ENCODE measurements at regions of chr21 and their contacts with region 1.

Region 1: GRCh38 chr21:36141513-36141925 is 6.6 kb downstream of the CBR3 start:
- DNase-seq: peak; percentile 91 to 94 (median 93)
- H3K4me3 ChIP-seq: no peak overlapping the region
- H3K27ac ChIP-seq: no peak overlapping the region
- H3K4me1 ChIP-seq: peaks cover 0 to 2% (median 1%) of the 10 kb centered on the region in 4 experiments
- H3K27me3 ChIP-seq: no peaks in the 10 kb centered on the region

Region 2: GRCh38 chr21:36156339-36156814 is 14.9 kb after region 1 on chr21:
- CTCF ChIA-PET with region 1: interaction called, 25 read pairs
- POLR2A ChIA-PET with region 1: no interaction called
- DNase-seq: peak; percentile 96 to 98 (median 98)
- H3K4me3 ChIP-seq: peak overlapping the region; percentile 74 to 99 (median 86)
- H3K27ac ChIP-seq: peak overlapping the region in 1 of 2 experiments; percentile 61
- H3K4me1 ChIP-seq: peaks cover 3 to 20% (median 11%) of the 10 kb centered on the region in 4 experiments
- H3K27me3 ChIP-seq: peaks cover 0 to 4% (median 0%) of the 10 kb centered on the region in 5 experiments

Region 3: DNA sequence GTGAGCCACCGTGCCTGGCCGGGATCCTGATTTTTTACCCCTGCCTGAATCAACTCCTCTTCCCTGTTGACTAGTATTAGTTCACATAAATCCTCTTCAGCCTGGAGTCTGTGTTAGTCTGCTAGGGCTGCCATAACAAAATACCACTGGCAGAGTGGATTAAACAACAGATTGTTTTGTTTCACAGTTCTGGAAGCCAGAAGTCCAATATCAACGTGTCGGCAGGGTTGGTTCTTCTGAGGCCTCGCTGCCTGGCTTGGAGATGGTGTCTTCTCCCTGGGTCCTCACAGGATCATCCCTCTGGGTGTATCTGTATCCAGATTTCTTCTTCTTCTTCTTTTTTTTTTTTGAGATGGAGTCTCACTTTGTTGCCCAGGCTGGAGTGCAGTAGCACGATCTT is 33.3 kb after region 1 on chr21:
- CTCF ChIA-PET with region 1: interaction called, 11 read pairs
- POLR2A ChIA-PET with region 1: no interaction called
- DNase-seq: no peak
- H3K4me3 ChIP-seq: no peak overlapping the region
- H3K27ac ChIP-seq: no peak overlapping the region
- H3K4me1 ChIP-seq: peaks cover 0 to 19% (median 7%) of the 10 kb centered on the region in 4 experiments
- H3K27me3 ChIP-seq: no peaks in the 10 kb centered on the region

Region 4: DNA sequence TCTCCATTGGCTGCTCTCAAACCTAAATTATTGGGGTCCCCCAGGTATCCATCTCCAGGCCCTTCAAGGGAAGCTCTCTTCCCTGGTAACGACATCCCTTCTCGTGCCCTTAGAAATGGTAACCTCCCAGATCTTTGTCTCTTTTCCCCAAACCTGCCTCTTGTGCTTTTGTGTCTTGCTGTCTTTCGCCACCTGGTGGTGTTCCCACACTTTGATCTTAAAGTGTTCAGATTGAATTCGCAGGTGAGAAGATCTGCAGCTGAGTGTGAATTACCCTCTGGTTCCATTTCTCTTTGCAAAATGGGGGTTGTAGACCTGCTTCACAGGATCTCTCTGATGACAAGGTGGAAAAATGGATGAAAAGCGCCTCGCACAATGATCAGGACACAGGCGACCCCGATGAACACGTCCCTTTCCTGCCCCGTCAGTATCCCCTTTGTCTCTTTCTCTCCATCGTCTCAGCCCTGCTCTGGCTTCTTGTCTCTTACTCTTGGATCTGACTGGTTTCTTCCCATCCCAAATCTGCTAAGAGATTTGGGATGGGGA is 68.2 kb after region 1 on chr21:
- CTCF ChIA-PET with region 1: interaction called, 104 read pairs
- POLR2A ChIA-PET with region 1: no interaction called
- DNase-seq: peak; percentile 71 to 81 (median 79)
- H3K4me3 ChIP-seq: no peak overlapping the region
- H3K27ac ChIP-seq: no peak overlapping the region
- H3K4me1 ChIP-seq: peaks cover 0 to 5% (median 1%) of the 10 kb centered on the region in 4 experiments
- H3K27me3 ChIP-seq: no peaks in the 10 kb centered on the region

Region 5: DNA sequence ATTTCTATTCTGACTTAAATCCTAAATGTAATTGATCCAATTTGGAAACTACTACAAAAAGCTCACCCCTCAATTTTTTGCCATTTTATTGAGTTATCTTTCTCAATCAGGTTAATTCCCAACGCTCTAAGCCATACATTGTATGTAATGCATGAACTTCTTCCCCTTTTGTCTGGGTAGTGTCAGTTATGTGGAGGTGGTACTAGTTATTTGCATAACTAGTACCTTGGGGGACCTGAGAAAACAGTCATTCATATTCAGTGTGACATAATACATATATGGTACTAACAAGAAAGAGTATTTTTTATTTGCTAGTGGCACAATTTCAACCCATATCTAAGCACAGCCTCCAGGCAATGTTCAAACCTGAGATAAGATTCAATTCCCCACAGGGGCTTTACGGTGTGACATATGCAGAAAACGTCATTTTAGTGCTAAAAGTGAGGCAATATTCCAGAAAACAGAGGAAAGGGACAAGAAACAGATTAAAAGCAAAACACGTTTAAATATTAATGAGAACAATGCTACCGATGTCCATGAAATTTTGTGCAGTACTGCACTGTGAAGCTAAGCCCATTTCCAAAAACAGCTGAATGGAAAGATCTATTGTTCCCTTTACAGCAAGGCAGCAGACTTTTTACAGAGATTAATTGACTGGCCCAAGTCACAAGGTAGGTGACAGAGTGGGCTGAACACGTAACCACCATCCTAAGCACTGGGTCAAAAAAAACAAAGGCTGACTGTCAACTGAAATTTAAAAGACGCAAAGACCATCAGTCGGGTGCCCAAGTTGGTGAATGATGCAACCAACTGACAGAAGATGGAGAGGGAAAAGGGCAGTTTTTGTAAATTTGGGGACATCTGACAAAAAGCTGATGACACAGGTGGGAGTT is 823.6 kb after region 1 on chr21:
- CTCF ChIA-PET with region 1: no interaction called
- POLR2A ChIA-PET with region 1: no interaction called
- DNase-seq: peak in 2 of 3 donors; percentile 42 to 62
- H3K4me3 ChIP-seq: peak overlapping the region in 4 of 7 experiments; percentile 67 to 85 (median 76)
- H3K27ac ChIP-seq: peak overlapping the region in 1 of 2 experiments; percentile 75
- H3K4me1 ChIP-seq: peaks cover 0 to 17% (median 13%) of the 10 kb centered on the region in 4 experiments
- H3K27me3 ChIP-seq: no peaks in the 10 kb centered on the region